Activated CD4-positive, alpha-beta memory T cell treated with anti-CD3 and anti-CD28 coated beads, Interleukin-2, amount 10 ng/mL, durations not matched to agents 7 days and 5 days (primary cell): ENCODE measurements at regions of chr6 and their contacts with region 1.

Region 1: GRCh38 chr6:44237813-44238433 is 9.0 kb upstream of the HSP90AB1 start:
- DNase-seq: peak; percentile 84
- H3K4me3 Mint-ChIP-seq: peak overlapping the region; percentile 81
- H3K27ac Mint-ChIP-seq: peak overlapping the region; percentile 89
- H3K4me1 Mint-ChIP-seq: peaks cover 28% of the 10 kb centered on the region
- H3K27me3 Mint-ChIP-seq: no peaks in the 10 kb centered on the region

Region 2: GRCh38 chr6:44221291-44221960 is 16.5 kb before region 1 on chr6:
- CTCF ChIA-PET with region 1: interaction called, 27 read pairs
- POLR2A ChIA-PET with region 1: interaction called, 48 read pairs
- DNase-seq: peak; percentile 82
- H3K4me3 Mint-ChIP-seq: no peak overlapping the region
- H3K27ac Mint-ChIP-seq: peak overlapping the region; percentile 3
- H3K4me1 Mint-ChIP-seq: peaks cover 46% of the 10 kb centered on the region
- H3K27me3 Mint-ChIP-seq: peaks cover 15% of the 10 kb centered on the region

Region 3: DNA sequence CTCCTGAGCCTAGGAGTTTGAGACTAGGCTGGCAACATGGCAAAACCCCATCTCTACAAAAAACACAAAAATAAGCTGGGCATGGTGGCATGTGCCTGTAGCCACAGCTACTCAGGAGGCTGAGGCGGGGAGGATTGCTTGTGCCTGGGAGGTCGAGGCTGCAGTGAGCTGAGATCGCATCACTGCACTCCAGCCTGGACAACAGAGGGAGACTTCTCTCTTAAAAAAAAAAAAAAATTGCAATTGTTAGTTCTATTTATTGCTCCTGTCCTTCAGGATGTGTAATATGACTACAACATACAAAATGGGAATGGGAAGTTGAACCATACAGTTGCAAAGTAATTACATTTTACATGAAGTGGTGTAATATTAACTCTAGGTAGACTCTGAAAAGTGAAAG is 83.3 kb after region 1 on chr6:
- CTCF ChIA-PET with region 1: no interaction called
- POLR2A ChIA-PET with region 1: no interaction called
- DNase-seq: no peak
- H3K4me3 Mint-ChIP-seq: no peak overlapping the region
- H3K27ac Mint-ChIP-seq: no peak overlapping the region
- H3K4me1 Mint-ChIP-seq: no peaks in the 10 kb centered on the region
- H3K27me3 Mint-ChIP-seq: peaks cover 45% of the 10 kb centered on the region